GM12878 (cell line): ENCODE measurements at regions of chr16 and their contacts with region 1.

Region 1: DNA sequence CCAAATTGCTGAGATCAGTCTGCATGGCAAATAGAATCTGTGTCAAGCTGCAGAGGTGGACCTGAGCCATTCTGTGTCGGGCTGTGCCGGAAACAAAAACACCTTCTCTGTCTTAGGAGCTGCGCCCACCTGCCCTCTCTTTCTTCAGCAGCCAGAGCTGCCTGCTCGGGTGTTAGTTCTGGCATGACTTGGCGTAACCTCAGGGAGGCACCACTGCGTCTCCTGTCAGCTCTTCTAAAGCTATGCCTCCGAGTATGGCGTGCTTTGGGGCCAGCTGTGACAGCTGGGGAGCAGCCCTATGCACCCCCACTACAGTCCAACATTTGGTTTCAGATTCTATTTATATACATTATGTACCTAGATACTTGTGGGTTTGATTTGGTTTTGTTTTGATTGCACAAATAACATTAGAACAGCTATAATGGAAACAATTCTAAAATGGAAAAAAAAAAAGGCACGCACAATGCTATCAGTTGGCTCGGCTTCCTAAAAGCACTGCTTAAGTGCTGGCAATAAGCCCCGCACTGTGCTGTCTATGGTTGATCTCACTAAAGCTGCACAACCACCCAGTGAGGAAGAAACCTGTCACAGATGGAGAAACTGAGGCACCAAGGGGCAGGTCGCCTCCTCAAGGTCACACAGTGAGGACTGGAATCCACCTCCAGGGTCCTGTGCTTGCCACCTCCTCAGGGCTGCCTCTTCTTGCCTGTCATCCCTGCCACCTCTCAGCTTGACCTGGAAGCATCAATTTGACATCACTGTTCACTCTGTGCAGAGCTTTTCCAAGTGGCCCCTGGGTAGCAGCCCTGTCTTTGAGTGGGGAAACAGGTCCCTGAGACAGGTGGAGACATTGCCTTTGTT is 18.7 kb upstream of the ADGRG1 start:
- DNase-seq: peak; percentile 83
- ATAC-seq: peak; percentile 92
- H3K4me3 ChIP-seq: peak overlapping the region; percentile 30; the same call in 1 of the 2 replicates
- H3K27ac ChIP-seq: peak overlapping the region; percentile 87
- H3K4me1 ChIP-seq: peaks cover 37% of the 10 kb centered on the region
- H3K27me3 ChIP-seq: no peaks in the 10 kb centered on the region
- CTCF ChIP-seq: peak; percentile 40 to 55 (median 41); a peak in 4 of 6 replicates
- EP300 ChIP-seq: peak; percentile 90 to 99; a peak in 3 of 4 replicates
- POLR2A ChIP-seq: peak; percentile 42; the same call in 1 of the 2 replicates
- RAD21 ChIP-seq: peak; percentile 67

Region 2: DNA sequence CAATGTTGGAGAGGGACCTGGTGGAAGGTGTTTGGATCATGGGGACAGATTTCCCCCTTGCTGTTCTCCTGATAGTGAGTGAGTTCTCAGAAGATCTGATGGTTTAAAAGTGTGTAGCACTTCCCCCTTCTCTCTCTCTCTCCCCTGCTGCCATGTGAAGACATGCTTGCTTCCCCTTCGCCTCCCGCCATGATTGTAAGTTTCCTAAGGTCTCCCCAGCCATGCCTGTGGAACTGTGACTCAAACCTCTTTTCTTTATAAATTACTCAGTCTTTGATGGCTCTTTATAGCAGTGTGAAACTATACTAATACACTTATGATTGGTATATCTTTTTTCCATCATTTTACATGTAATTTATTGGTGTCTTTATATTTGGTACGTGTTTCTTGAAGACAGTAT is 53.9 kb before region 1 on chr16:
- CTCF ChIA-PET with region 1: no interaction called
- POLR2A ChIA-PET with region 1: no interaction called
- RAD21 ChIA-PET with region 1: no interaction called
- SMC1A ChIA-PET with region 1: no interaction called
- in situ Hi-C with region 1: no loop called
- intact Hi-C with region 1: no loop called
- DNase-seq: no peak
- ATAC-seq: no peak
- H3K4me3 ChIP-seq: no peak overlapping the region
- H3K27ac ChIP-seq: no peak overlapping the region
- H3K4me1 ChIP-seq: no peaks in the 10 kb centered on the region
- H3K27me3 ChIP-seq: no peaks in the 10 kb centered on the region
- CTCF ChIP-seq: no peak
- EP300 ChIP-seq: no peak
- POLR2A ChIP-seq: no peak
- RAD21 ChIP-seq: no peak

Region 3: DNA sequence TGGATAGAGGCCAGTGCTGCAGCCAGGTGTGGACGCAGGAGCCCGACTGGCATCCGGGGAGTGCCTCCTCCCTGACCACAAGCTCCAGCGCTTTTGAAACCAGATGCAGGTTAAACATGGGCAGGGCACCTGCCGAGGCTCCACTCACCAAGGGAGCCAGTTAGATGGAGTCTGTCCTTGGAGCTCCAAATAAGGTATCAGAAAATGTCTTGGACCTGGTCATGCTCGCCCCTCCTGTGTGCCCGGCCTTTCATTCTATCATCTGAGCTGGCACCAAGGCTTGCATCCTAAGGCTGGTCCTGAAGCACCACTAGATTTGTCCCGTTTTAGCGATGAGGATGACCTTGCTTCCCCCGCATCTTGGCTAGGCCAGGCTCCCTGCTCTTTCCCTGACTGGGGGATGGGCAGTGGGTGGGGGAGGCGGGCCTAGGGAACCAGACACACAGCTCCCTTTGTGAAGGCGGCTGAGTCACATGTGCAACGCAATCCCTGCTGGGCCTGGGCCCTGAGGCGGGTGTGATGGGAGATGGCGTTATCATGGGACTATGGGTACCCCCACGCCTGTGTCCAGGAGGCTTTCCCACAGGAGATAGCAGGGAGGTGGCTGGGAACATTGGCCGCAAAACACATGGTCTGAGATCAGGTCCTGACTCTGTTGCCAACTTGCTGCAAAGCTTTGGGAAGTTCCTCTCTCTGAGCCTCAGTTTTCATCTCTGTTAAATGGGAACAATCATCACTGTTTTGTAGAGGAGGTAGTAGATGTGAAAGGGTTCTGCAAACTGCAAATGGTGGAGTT is 13.7 kb after region 1 on chr16:
- CTCF ChIA-PET with region 1: interaction called, 3 read pairs
- POLR2A ChIA-PET with region 1: interaction called, 7 read pairs
- RAD21 ChIA-PET with region 1: interaction called, 7 read pairs
- SMC1A ChIA-PET with region 1: interaction called, 11 read pairs
- in situ Hi-C with region 1: no loop called
- intact Hi-C with region 1: no loop called
- DNase-seq: no peak
- ATAC-seq: no peak
- H3K4me3 ChIP-seq: no peak overlapping the region
- H3K27ac ChIP-seq: no peak overlapping the region
- H3K4me1 ChIP-seq: no peaks in the 10 kb centered on the region
- H3K27me3 ChIP-seq: peaks cover 0 to 3% of the 10 kb centered on the region in 2 experiments; a peak in 1 of 4 replicates
- CTCF ChIP-seq: no peak
- EP300 ChIP-seq: no peak
- POLR2A ChIP-seq: no peak
- RAD21 ChIP-seq: no peak

Region 4: GRCh38 chr16:57639172-57639887 is 29.6 kb after region 1 on chr16:
- CTCF ChIA-PET with region 1: interaction called, 14 read pairs
- POLR2A ChIA-PET with region 1: no interaction called
- RAD21 ChIA-PET with region 1: interaction called, 8 read pairs
- SMC1A ChIA-PET with region 1: interaction called, 17 read pairs
- in situ Hi-C with region 1: loop called (anchors 5 kb)
- intact Hi-C with region 1: no loop called
- DNase-seq: no peak
- ATAC-seq: peak; percentile 28; the same call in 1 of the 3 replicates
- H3K4me3 ChIP-seq: no peak overlapping the region
- H3K27ac ChIP-seq: no peak overlapping the region
- H3K4me1 ChIP-seq: no peaks in the 10 kb centered on the region
- H3K27me3 ChIP-seq: peaks cover 0 to 6% of the 10 kb centered on the region in 2 experiments; a peak in 3 of 4 replicates
- CTCF ChIP-seq: no peak
- EP300 ChIP-seq: no peak
- POLR2A ChIP-seq: no peak
- RAD21 ChIP-seq: no peak

Region 5: DNA sequence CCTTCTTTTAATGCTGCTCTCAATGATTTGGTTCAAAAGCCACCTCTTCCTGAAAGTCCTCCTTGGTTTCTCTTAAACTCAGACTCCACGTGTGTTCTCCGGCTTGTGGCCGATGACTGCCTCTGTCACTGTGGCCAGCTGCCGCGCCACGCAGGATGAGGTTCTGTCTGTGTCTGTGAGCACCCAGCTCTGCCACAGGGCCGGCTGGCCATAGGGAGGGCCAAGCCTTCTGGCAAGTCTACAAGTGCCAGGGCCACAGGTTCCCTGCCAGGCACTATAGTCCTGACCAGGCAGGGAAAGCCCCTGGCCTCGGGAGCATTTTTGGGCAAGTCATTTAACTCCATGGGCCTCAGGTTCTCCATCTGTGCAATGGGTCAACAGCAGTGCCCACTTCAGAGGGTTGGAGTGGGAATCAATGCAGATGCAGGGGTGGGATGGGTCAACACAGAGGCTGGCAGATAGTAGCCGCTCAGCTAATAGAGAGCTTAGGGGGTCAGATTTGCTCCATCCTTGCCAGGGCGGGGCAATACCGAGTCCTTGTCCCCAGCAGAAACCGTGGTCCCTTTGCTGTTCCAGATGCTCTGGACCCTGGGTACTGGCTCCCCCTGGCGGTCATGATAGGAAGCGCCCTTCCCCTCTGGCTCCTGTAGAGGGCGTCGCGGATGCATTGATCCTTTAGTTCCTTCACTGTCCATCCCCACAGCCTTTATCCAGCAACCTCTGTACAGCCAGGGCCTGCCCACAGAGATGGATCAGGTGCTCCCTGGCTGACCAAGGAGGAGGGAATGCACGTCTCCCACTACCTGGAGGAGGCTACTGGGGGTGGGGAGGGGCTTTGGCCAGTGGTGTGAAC is 39.0 kb after region 1 on chr16:
- CTCF ChIA-PET with region 1: interaction called, 113 read pairs
- POLR2A ChIA-PET with region 1: interaction called, 11 read pairs
- RAD21 ChIA-PET with region 1: interaction called, 63 read pairs
- SMC1A ChIA-PET with region 1: interaction called, 126 read pairs
- in situ Hi-C with region 1: loop called (anchors 5 kb)
- intact Hi-C with region 1: no loop called
- DNase-seq: peak; percentile 52
- ATAC-seq: peak; percentile 83
- H3K4me3 ChIP-seq: no peak overlapping the region
- H3K27ac ChIP-seq: peak overlapping the region; percentile 13; the same call in 1 of the 2 replicates
- H3K4me1 ChIP-seq: peaks cover 19% of the 10 kb centered on the region
- H3K27me3 ChIP-seq: no peaks in the 10 kb centered on the region
- CTCF ChIP-seq: peak; percentile 100; a peak in 5 of 6 replicates
- EP300 ChIP-seq: no peak
- POLR2A ChIP-seq: no peak
- RAD21 ChIP-seq: peak; percentile 99

Region 6: GRCh38 chr16:57734925-57735754 is 125.4 kb after region 1 on chr16:
- CTCF ChIA-PET with region 1: interaction called, 8 read pairs
- POLR2A ChIA-PET with region 1: no interaction called
- RAD21 ChIA-PET with region 1: interaction called, 10 read pairs
- SMC1A ChIA-PET with region 1: no interaction called
- in situ Hi-C with region 1: no loop called
- intact Hi-C with region 1: loop called (anchors 5 kb)
- DNase-seq: peak; percentile 99
- ATAC-seq: peak; percentile 95
- H3K4me3 ChIP-seq: peak overlapping the region; percentile 83
- H3K27ac ChIP-seq: peak overlapping the region; percentile 96
- H3K4me1 ChIP-seq: peaks cover 10% of the 10 kb centered on the region
- H3K27me3 ChIP-seq: no peaks in the 10 kb centered on the region
- CTCF ChIP-seq: no peak
- EP300 ChIP-seq: no peak
- POLR2A ChIP-seq: peak; percentile 75
- RAD21 ChIP-seq: no peak